Activated CD4-positive, alpha-beta T cell treated with anti-CD3 and anti-CD28 coated beads, Interleukin-2, amount 10 ng/mL, durations not matched to agents 24 days and 14 days (primary cell): ENCODE measurements at regions of chr2 and their contacts with region 1.

Region 1: DNA sequence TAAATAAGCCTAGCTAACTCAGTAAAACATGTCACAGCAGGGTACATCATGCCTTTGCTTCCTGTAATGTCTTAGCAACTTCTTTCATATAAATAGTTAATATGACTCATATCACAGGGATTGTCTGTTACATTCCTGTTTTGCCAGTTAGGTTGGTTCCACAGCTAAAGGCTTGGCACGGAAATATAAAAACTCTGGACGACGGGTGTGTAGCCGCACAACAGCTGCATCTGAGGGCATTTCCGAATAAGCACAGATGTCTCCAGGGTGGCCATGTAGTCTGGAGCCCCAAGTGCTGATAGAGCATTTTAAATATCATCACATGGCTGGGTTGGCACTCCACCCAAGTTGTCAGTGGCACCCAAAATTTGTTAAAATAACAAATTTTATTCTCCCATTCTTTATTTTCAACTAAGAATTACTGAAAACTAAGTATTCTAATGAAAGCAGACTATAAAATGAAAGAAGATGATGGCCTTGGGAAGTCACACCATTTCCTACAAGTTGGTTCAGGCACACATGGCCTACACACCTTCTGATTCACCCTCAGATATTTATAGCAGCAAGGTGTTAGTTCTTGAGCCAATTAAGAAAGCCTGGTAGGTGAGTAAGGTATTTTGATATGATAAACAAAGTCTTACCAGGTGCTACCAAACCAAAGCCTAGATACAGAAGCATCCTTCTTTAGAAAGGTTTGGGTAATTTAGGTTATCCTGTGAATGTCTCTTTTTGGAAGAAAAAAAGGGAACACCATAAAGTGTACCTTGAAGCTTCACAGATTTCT is 61.8 kb upstream of the STK17B start:
- DNase-seq: no peak
- H3K4me3 Mint-ChIP-seq: no peak overlapping the region
- H3K27ac Mint-ChIP-seq: peak overlapping the region; percentile 72
- H3K4me1 Mint-ChIP-seq: peaks cover 79% of the 10 kb centered on the region
- H3K27me3 Mint-ChIP-seq: no peaks in the 10 kb centered on the region

Region 2: DNA sequence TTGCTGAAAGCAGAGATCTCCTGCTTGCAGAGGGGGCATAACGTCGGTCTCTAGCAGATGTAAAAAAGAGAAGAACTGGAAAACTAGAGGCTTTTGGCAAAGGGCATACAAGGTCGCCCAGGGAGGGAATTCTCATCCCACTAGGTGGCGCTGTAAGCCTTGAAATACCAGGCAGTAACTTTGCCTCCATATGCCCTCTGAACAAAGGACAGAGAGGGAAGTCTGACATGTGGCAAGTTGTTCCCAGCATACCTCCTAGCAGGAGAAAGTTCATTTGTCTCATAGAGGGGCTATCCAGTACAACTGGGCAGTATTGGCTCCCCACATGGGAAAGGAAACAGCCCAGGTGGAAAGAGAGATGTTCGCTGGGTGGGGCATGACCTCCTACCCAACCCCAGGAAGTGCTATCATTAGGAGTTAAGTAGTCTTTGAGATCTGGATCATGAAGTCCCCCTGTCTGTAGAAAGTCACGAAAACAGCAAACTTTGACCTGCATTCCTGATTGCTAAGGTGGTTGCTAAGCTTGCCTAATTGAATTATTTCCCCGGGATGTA is 101.8 kb before region 1 on chr2:
- intact Hi-C with region 1: no loop called
- DNase-seq: peak; percentile 90
- H3K4me3 Mint-ChIP-seq: no peak overlapping the region
- H3K27ac Mint-ChIP-seq: peak overlapping the region; percentile 83
- H3K4me1 Mint-ChIP-seq: peaks cover 16% of the 10 kb centered on the region
- H3K27me3 Mint-ChIP-seq: no peaks in the 10 kb centered on the region

Region 3: DNA sequence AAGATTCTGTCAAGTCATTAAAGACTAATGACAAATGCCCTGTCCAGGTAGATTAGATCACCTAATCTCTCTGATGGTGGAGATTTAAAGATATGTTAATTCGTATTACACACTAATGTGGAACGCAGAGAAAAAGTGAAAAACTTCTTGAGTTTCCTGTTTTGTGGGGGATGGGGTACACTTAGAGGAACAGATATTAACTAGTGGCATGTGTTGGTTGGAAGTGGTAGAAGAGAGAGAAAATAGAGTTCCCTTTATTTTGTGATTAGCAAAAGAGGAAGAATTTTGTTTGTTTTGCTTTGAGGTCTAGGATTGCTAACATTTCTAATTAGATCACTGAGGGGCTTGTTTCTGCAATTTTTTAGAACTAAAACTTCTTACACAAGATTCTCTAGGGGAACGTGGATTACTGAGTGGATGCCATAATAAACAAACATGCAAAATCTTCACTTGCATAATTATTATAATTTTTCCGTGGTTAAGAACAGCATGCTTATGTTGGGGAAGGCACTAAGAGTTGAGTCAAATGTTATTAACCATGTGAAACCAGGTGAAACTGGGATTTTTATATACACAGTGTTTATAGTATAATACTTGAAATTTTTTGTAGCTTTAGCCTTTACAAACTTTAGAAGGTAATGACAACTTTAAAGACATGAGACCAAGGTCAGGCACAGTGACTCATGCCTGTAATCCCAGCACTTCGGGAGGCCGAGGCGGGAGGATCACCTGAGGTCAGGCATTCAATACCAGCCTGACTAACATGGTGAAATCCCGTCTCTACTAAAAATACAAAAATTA is 35.5 kb after region 1 on chr2:
- intact Hi-C with region 1: loop called (anchors 5 kb)
- DNase-seq: no peak
- H3K4me3 Mint-ChIP-seq: peak overlapping the region; percentile 65
- H3K27ac Mint-ChIP-seq: peak overlapping the region; percentile 65
- H3K4me1 Mint-ChIP-seq: peaks cover 36% of the 10 kb centered on the region
- H3K27me3 Mint-ChIP-seq: no peaks in the 10 kb centered on the region